Mammary epithelial cell (primary cell): ENCODE measurements at regions of chr10 and their contacts with region 1.

Region 1: DNA sequence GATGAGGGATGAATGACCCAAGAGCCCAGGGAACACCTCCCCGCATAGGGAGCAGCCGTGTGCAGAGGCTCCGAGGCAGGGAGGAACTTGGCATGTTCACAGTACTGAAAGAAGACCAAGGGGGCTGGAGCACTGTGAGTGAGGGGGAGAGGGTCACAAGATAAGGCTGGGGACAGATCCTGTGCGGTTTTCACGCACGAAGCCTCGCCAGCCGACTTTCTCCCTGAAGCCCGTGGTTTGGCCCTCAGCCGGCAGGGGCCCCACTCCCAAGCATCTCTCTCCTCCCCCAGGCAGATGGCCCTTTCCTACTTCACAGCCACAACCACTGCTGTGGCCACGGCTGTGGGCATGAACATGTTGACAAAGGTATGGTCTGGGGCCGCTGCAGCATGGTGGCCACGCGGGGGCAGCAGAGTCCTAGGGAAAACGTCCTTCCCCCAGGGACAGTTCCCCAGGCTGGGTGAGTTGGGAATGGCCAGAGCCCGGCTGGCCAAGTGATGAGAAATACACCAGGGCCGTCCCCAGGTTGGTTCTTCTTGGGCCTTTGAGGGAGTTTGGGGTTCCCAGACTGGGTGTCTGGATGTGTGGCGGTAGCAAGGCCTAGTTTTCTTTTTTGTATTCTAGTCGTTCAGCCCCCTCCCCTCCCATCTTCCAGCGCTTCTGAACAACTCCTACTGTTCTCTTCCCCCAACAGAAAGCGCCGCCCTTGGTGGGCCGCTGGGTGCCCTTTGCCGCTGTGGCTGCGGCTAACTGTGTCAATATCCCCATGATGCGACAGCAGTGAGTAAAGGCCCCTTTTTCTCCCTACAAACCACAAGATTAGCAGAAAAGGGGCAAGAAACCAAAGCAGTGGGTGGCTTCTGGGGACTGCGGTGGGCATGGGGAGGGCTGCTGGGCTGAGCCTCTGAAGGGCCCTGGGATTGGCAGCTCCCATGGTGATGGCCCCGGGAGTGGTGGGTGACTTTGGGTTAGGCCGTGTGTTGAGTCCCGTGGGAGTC is 14.4 kb upstream of the WBP1L start:
- DNase-seq: peak; percentile 57
- H3K4me3 ChIP-seq: no peak overlapping the region
- H3K27ac ChIP-seq: no peak overlapping the region
- H3K4me1 ChIP-seq: no peaks in the 10 kb centered on the region
- H3K27me3 ChIP-seq: no peaks in the 10 kb centered on the region
- CTCF ChIP-seq: peak; percentile 90

Region 2: DNA sequence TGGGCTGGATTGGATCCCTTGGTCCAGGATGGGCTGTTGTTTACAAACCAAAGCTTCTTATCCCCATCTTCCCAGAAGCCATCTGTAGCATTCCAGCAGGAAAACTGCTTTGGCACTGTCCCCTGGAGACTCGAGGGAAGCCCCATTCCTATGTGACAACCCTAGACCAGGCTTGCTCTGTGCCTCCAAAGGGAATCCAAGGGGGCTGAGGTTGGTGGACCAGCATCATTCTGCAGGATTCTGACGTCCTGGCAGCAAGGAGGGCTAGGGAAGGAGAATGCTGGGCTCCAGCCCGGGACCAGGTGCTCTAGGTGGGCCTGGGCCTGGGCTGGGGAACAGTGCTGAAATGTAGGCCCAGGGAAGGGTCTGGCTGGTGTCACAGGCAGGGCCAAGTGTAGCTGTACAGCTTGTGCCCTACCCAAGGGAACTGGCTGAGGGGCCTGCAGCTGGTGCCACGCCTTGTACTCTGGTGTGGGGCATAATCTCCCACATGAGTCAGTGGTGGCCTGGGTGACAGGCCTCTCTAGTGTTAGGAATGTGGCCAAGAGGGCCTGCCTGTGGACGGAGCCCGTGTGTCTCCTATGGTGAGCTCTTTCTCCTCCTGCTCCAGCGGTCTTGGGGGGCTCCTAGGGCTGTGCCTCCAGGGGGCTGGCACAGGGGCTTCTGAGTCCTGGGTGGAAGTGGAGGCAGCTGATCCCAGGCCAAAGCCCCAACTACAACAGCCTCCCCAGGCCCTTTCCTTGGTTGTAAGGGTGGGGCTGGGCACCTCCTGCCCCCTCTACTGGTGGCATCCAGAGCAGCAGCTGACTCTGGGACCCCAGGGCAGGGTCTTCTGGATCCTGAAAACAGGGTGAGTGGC is 59.9 kb before region 1 on chr10:
- CTCF ChIA-PET with region 1: no interaction called
- dilution Hi-C with region 1: loop called (anchors 5 kb)
- in situ Hi-C with region 1: no loop called
- intact Hi-C with region 1: no loop called
- DNase-seq: peak; percentile 47
- H3K4me3 ChIP-seq: no peak overlapping the region
- H3K27ac ChIP-seq: no peak overlapping the region
- H3K4me1 ChIP-seq: peaks cover 26% of the 10 kb centered on the region
- H3K27me3 ChIP-seq: no peaks in the 10 kb centered on the region
- CTCF ChIP-seq: peak in 1 of 2 donors; percentile 50

Region 3: DNA sequence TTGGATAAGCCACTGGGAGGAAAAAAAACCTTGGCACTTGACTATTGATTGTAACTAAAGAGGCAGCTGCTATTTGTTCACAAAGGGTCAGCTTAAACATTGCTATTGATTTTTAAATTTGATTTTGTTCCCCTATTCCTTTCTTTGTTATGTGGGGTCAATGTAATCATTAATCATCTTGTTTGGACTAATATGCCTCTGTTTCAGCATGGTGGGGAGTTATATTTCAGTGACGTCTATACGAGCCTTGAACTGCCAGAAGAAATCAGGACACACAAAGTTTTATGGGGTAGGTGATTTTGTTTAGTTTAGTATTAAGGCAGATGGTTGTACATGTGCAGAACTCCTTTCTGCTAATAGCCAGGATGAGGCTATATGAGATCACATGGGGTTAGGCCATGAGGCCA is 147.4 kb after region 1 on chr10:
- CTCF ChIA-PET with region 1: no interaction called
- dilution Hi-C with region 1: no loop called
- in situ Hi-C with region 1: no loop called
- intact Hi-C with region 1: no loop called
- DNase-seq: no peak
- H3K4me3 ChIP-seq: no peak overlapping the region
- H3K27ac ChIP-seq: no peak overlapping the region
- H3K4me1 ChIP-seq: no peaks in the 10 kb centered on the region
- H3K27me3 ChIP-seq: no peaks in the 10 kb centered on the region
- CTCF ChIP-seq: no peak

Region 4: DNA sequence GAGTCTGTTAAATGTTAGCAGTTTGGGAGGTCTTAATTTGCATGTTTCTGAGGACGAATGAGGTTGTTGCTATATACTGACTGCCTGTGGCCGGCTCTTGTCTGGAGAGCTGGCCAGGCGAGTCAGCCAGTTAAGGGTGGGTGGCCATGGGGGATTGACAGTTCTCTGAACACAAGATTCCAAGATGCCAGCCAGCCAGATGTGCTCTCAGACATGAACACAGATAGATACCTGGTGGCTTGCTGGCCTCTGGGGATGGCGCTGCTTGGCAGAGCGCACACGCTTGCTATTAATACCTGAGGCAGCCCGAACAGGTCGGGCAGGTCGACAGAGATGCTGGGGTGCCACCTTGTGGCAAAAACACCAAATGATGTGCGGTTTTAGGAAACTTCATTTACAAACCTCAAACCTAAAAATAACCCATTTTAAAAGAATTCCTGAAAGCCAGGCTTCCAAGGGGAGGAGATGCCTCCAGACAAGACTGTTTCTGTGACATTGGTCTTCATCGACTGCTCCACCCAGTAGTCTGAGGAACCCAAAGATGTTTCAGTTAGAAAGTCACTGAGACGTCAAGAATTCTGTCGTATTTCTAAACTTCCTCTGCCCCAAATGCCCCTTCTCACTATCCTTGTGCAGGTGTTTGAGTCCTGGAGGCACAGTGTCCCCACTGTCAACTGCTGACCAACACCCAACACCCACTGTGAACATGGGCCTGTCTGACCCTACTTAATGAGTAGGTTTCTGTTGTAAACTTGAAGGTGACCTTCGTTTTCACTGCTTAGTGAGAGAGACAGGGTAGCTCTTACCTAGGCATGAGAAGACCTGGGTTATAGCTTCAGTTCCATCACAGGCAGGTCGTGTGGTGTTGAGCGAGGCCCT is 340.4 kb after region 1 on chr10:
- CTCF ChIA-PET with region 1: no interaction called
- dilution Hi-C with region 1: no loop called
- in situ Hi-C with region 1: loop called in 1 of 2 experiments (anchors 25 kb)
- intact Hi-C with region 1: loop called (anchors 1 kb)
- DNase-seq: peak; percentile 48
- H3K4me3 ChIP-seq: no peak overlapping the region
- H3K27ac ChIP-seq: no peak overlapping the region
- H3K4me1 ChIP-seq: no peaks in the 10 kb centered on the region
- H3K27me3 ChIP-seq: no peaks in the 10 kb centered on the region
- CTCF ChIP-seq: peak; percentile 68 to 73

Region 5: GRCh38 chr10:103367782-103368518 is 638.6 kb after region 1 on chr10 and contains the start of gene TAF5:
- CTCF ChIA-PET with region 1: no interaction called
- dilution Hi-C with region 1: no loop called
- in situ Hi-C with region 1: no loop called
- intact Hi-C with region 1: no loop called
- DNase-seq: peak; percentile 93
- H3K4me3 ChIP-seq: peak within 1 kb of the TSS; percentile 76 to 93 (median 88)
- H3K27ac ChIP-seq: peak within 1 kb of the TSS; percentile 23
- H3K4me1 ChIP-seq: peaks cover 8% of the 10 kb centered on the region
- H3K27me3 ChIP-seq: no peaks in the 10 kb centered on the region
- CTCF ChIP-seq: no peak
- total RNA-seq, gene TAF5: 2.8 to 4.3 TPM